OCI-LY7 (cell line): ENCODE measurements at regions of chr1 and their contacts with region 1.

Region 1: GRCh38 chr1:67149179-67149770 is 14.5 kb upstream of the C1orf141 start:
- DNase-seq: peak; percentile 90
- H3K4me3 ChIP-seq: peak overlapping the region; percentile 0
- H3K27ac ChIP-seq: peak overlapping the region; percentile 15
- H3K4me1 ChIP-seq: peaks cover 7% of the 10 kb centered on the region
- CTCF ChIP-seq: peak; percentile 96

Region 2: GRCh38 chr1:66711420-66711819 is 437.9 kb before region 1 on chr1:
- CTCF ChIA-PET with region 1: interaction called, 19 read pairs
- POLR2A ChIA-PET with region 1: no interaction called
- intact Hi-C with region 1: no loop called
- DNase-seq: no peak
- H3K4me3 ChIP-seq: no peak overlapping the region
- H3K27ac ChIP-seq: no peak overlapping the region
- H3K4me1 ChIP-seq: no peaks in the 10 kb centered on the region
- CTCF ChIP-seq: peak; percentile 46; the same call in 1 of the 2 replicates

Region 3: GRCh38 chr1:66867501-66867900 is 281.8 kb before region 1 on chr1:
- CTCF ChIA-PET with region 1: no interaction called
- POLR2A ChIA-PET with region 1: no interaction called
- intact Hi-C with region 1: no loop called
- DNase-seq: no peak
- H3K4me3 ChIP-seq: no peak overlapping the region
- H3K27ac ChIP-seq: no peak overlapping the region
- H3K4me1 ChIP-seq: no peaks in the 10 kb centered on the region
- CTCF ChIP-seq: no peak

Region 4: DNA sequence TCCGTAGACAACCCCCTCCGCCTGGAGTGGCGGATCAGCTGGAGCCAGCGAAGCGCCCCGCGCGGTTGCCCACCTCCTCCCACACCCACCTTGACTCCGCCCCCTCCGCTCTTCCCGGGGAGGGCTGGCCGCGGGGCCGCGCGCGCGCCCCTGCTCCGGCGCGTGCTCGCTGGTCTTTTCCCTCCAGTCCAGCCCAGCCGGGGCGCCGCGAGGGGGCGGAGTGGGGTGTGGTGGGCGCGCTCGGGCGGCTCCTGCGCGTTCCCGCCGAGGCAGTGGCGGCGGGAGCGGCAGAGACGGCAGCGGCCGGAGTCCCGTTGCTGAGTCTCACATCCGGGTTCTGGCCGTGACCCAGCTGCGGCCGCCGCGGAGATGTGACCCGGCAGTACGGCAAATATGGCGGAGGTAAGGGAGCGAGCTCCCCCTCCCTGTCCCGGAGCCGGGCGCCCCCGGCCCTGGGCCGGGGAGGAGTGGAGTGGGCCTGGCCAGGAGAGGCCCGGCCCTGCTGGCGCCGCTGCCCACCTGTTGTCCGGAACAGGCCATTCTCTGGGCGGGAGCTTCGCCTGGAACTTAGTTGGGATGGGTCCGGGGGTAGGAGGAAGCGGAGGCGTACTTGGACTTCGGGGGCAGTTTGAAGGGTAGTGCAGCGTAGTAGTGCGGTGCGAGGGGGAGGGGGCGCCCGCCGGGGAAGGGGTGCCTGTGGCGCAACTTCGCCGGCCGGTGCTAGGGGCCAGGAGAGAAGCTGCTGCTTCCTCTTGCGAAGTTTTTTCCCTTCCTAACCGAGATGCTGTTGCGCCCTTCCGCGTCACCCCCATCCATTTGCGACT is 219.1 kb before region 1 on chr1:
- CTCF ChIA-PET with region 1: no interaction called
- POLR2A ChIA-PET with region 1: no interaction called
- intact Hi-C with region 1: loop called (anchors 1 kb)
- DNase-seq: peak; percentile 96
- H3K4me3 ChIP-seq: peak overlapping the region; percentile 98
- H3K27ac ChIP-seq: peak overlapping the region; percentile 86
- H3K4me1 ChIP-seq: peaks cover 60% of the 10 kb centered on the region
- CTCF ChIP-seq: peak; percentile 36; the same call in 1 of the 2 replicates

Region 5: DNA sequence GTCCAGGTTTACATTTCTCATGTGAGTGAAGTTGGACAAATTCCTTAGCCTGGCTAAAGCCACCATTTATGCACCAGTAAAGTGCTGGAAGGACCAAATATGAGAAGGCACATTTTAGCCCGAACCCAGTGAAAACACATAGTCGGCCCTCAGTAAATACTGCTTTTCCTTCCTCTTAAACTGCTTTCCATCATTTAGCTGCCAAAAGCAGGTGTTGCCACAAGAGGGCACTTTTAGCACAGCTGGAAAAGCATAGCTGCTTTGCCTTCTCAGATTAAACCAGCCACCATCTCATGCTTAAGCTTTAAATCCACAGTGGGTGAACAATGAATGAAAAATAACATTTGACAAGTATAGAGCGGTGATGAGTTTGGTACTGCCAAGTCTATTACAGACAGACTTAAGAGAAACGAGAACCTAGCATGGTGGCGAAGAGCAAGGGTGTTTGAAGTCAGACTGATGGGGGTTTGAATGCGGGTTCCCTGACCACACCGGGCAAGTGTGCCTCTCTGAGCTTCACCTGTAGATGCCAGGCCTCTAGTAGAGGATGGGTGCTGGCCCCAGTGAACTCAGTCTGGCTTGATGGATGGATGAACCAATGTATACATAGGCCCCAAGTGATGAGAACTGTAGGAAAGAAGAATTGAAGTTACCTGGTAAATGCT is 153.1 kb before region 1 on chr1:
- CTCF ChIA-PET with region 1: interaction called, 20 read pairs
- POLR2A ChIA-PET with region 1: interaction called, 8 read pairs
- intact Hi-C with region 1: loop called (anchors 1 kb)
- DNase-seq: peak; percentile 85
- H3K4me3 ChIP-seq: no peak overlapping the region
- H3K27ac ChIP-seq: no peak overlapping the region
- H3K4me1 ChIP-seq: peaks cover 26% of the 10 kb centered on the region
- CTCF ChIP-seq: peak; percentile 97

Region 6: GRCh38 chr1:67110352-67110751 is 38.9 kb before region 1 on chr1:
- CTCF ChIA-PET with region 1: no interaction called
- POLR2A ChIA-PET with region 1: no interaction called
- intact Hi-C with region 1: loop called (anchors 5 kb)
- DNase-seq: peak; percentile 73
- H3K4me3 ChIP-seq: peak overlapping the region; percentile 46
- H3K27ac ChIP-seq: peak overlapping the region; percentile 90
- H3K4me1 ChIP-seq: peaks cover 70% of the 10 kb centered on the region
- CTCF ChIP-seq: no peak